ENCODE measurements at regions of chr9 and their contacts with region 1.

Region 1: DNA sequence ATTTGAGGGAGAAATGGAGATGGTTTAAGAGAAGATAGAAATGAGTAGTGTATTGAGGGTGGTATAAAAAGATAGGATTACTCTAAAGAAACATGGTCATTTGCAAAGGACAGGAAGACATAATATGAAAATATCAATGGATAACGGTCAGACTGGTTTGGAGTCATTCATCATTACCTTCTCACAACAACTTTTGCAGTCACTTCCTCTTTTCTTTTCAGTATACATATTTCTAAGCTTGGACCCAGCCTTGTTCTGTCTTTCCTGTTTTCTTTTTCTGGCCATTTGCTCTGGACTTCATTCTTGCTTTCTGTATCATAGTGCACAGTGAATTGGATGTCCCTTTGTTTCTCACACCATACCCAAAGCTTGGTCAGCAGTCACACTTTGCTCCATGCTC is 966.5 kb upstream of the TYRP1 start:
- DNase-seq: no peak
- ATAC-seq: no peak
- H3K4me3 ChIP-seq: no peak overlapping the region
- H3K4me3 Mint-ChIP-seq: no peak overlapping the region
- H3K27ac ChIP-seq: no peak overlapping the region
- H3K27ac Mint-ChIP-seq: no peak overlapping the region
- H3K4me1 ChIP-seq: no peaks in the 10 kb centered on the region
- H3K4me1 Mint-ChIP-seq: no peaks in the 10 kb centered on the region
- H3K27me3 ChIP-seq: no peaks in the 10 kb centered on the region
- H3K27me3 Mint-ChIP-seq: no peaks in the 10 kb centered on the region
- CTCF ChIP-seq: no peak

Region 2: GRCh38 chr9:11646831-11647230 is 79.8 kb before region 1 on chr9:
- CTCF ChIA-PET with region 1: no interaction called
- POLR2A ChIA-PET with region 1: no interaction called
- intact Hi-C with region 1: loop called in 1 of 2 experiments (anchors 2 kb)
- DNase-seq: no peak
- ATAC-seq: no peak
- H3K4me3 ChIP-seq: no peak overlapping the region
- H3K4me3 Mint-ChIP-seq: no peak overlapping the region
- H3K27ac ChIP-seq: no peak overlapping the region
- H3K27ac Mint-ChIP-seq: no peak overlapping the region
- H3K4me1 ChIP-seq: no peaks in the 10 kb centered on the region
- H3K4me1 Mint-ChIP-seq: no peaks in the 10 kb centered on the region
- H3K27me3 ChIP-seq: no peaks in the 10 kb centered on the region
- H3K27me3 Mint-ChIP-seq: no peaks in the 10 kb centered on the region
- CTCF ChIP-seq: no peak

Region 3: GRCh38 chr9:11743356-11743755 is 16.7 kb after region 1 on chr9:
- CTCF ChIA-PET with region 1: no interaction called
- POLR2A ChIA-PET with region 1: no interaction called
- intact Hi-C with region 1: no loop called
- DNase-seq: no peak
- ATAC-seq: no peak
- H3K4me3 ChIP-seq: no peak overlapping the region
- H3K4me3 Mint-ChIP-seq: no peak overlapping the region
- H3K27ac ChIP-seq: no peak overlapping the region
- H3K27ac Mint-ChIP-seq: no peak overlapping the region
- H3K4me1 ChIP-seq: no peaks in the 10 kb centered on the region
- H3K4me1 Mint-ChIP-seq: no peaks in the 10 kb centered on the region
- H3K27me3 ChIP-seq: no peaks in the 10 kb centered on the region
- H3K27me3 Mint-ChIP-seq: no peaks in the 10 kb centered on the region
- CTCF ChIP-seq: no peak